Activated CD4-positive, alpha-beta memory T cell treated with anti-CD3 and anti-CD28 coated beads, Interleukin-2, amount 10 ng/mL, durations not matched to agents 7 days and 5 days (primary cell): ENCODE measurements at regions of chr3 and their contacts with region 1.

Region 1: GRCh38 chr3:101849051-101849720 is at the start of gene NFKBIZ:
- DNase-seq: peak; percentile 95
- H3K4me3 Mint-ChIP-seq: peak within 1 kb of the TSS; percentile 98
- H3K27ac Mint-ChIP-seq: peak within 1 kb of the TSS; percentile 100
- H3K4me1 Mint-ChIP-seq: peaks cover 45% of the 10 kb centered on the region
- H3K27me3 Mint-ChIP-seq: no peaks in the 10 kb centered on the region
- total RNA-seq, gene NFKBIZ: 76.5 to 81.3 TPM

Region 2: GRCh38 chr3:101685870-101686412 is 163.2 kb before region 1 on chr3:
- CTCF ChIA-PET with region 1: no interaction called
- POLR2A ChIA-PET with region 1: interaction called, 12 read pairs
- DNase-seq: no peak
- H3K4me3 Mint-ChIP-seq: peak overlapping the region; percentile 99
- H3K27ac Mint-ChIP-seq: peak overlapping the region; percentile 93
- H3K4me1 Mint-ChIP-seq: peaks cover 48% of the 10 kb centered on the region
- H3K27me3 Mint-ChIP-seq: no peaks in the 10 kb centered on the region

Region 3: DNA sequence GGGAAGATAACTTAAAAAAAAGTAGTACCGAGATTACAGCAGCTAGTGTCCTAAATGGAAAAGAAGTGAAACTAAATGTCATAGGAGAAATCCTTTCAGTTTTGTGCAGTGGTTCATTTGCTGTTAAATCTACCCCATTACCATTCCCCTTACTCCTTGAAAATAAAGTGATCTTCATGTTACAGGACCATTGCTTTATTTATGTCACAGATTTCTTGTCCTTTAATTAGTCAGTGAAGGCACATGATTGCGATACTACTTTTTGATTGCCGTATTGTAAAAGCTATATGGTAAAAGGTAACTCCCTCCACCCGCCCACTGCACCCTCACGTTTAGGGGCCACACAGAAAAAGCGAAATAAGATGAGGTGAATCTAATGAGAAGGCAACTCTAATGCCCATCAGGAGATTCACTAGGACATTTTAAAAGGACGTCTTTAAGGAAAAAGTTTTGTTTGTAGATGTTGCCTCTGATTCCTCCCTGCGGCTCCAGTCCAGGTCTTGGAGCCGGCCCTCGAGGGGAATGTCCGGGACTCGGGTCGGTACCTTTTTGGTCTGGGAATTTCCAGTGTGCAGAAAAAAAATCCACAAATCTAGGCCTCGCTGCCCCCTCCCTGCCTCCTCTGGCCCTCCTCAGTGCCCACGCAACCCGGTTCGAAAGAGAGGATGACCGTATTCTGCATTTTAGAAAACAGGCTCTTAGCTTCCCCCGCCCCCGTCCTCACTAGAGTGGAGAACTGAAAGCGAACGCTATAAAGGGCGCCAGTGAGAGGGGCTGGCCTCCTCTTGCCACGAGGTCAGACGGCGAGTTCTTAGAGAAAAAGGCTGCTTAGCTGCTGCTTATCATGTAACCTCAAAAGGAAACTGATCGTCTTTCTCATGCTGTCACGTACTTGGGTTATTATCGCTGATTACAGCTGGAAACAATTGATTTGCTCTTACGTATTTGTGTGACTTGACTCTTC is 21.7 kb before region 1 on chr3:
- CTCF ChIA-PET with region 1: interaction called, 11 read pairs
- POLR2A ChIA-PET with region 1: interaction called, 374 read pairs
- DNase-seq: peak; percentile 83
- H3K4me3 Mint-ChIP-seq: peak overlapping the region; percentile 82
- H3K27ac Mint-ChIP-seq: peak overlapping the region; percentile 90
- H3K4me1 Mint-ChIP-seq: peaks cover 53% of the 10 kb centered on the region
- H3K27me3 Mint-ChIP-seq: no peaks in the 10 kb centered on the region

Region 4: DNA sequence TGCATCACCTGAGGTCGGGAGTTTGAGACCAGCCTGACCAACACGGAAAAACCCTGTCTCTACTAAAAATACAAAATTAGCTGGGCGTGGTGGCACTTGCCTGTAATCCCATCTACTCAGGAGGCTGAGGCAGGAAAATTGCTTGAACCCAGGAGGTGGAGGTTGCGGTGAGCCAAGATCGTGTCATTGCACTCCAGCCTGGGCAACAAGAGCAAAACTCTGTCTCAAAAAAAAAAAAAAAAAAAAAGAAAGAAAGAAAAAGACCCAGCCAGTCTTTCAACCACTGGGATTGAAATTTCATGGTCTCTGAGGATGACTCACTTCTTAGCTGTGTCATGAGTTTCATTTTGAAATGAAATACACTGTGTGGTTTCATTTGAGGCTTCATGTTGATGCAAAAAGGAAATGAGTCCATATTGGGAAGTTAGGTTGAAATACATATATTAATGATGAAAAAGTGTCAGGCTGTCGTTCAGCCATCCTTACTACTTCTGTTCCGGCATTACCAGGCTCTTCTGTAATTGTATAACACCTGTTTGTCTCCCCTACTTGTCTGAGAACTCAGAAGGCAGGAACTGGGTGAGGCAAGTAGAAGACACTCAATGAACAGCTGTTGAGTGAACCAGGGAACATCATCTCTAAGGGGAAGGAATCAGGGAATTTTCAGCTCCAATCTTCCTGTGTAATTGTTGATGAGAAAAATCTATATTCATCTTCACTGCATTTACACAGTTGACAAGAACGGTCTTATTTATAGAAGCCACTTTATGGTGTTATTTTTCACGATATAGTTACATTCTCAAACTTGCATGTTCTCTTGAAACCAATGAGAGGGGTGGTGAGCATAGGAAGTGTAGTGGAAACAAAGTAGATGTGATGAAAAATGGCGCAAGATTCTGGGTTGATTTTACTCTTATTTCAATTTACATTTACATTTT is 87.5 kb after region 1 on chr3:
- CTCF ChIA-PET with region 1: interaction called, 3 read pairs
- POLR2A ChIA-PET with region 1: interaction called, 60 read pairs
- DNase-seq: peak; percentile 47
- H3K4me3 Mint-ChIP-seq: peak overlapping the region; percentile 28
- H3K27ac Mint-ChIP-seq: peak overlapping the region; percentile 74
- H3K4me1 Mint-ChIP-seq: peaks cover 29% of the 10 kb centered on the region
- H3K27me3 Mint-ChIP-seq: peaks cover 33% of the 10 kb centered on the region

Region 5: GRCh38 chr3:102092617-102093466 is 243.7 kb after region 1 on chr3:
- CTCF ChIA-PET with region 1: interaction called, 3 read pairs
- POLR2A ChIA-PET with region 1: interaction called, 24 read pairs
- DNase-seq: no peak
- H3K4me3 Mint-ChIP-seq: peak overlapping the region; percentile 8
- H3K27ac Mint-ChIP-seq: peak overlapping the region; percentile 83
- H3K4me1 Mint-ChIP-seq: peaks cover 44% of the 10 kb centered on the region
- H3K27me3 Mint-ChIP-seq: peaks cover 6% of the 10 kb centered on the region